Activated naive CD4-positive, alpha-beta T cell treated with anti-CD3 and anti-CD28 coated beads for 36 hours (primary cell): ENCODE measurements at regions of chr4 and their contacts with region 1.

Region 1: DNA sequence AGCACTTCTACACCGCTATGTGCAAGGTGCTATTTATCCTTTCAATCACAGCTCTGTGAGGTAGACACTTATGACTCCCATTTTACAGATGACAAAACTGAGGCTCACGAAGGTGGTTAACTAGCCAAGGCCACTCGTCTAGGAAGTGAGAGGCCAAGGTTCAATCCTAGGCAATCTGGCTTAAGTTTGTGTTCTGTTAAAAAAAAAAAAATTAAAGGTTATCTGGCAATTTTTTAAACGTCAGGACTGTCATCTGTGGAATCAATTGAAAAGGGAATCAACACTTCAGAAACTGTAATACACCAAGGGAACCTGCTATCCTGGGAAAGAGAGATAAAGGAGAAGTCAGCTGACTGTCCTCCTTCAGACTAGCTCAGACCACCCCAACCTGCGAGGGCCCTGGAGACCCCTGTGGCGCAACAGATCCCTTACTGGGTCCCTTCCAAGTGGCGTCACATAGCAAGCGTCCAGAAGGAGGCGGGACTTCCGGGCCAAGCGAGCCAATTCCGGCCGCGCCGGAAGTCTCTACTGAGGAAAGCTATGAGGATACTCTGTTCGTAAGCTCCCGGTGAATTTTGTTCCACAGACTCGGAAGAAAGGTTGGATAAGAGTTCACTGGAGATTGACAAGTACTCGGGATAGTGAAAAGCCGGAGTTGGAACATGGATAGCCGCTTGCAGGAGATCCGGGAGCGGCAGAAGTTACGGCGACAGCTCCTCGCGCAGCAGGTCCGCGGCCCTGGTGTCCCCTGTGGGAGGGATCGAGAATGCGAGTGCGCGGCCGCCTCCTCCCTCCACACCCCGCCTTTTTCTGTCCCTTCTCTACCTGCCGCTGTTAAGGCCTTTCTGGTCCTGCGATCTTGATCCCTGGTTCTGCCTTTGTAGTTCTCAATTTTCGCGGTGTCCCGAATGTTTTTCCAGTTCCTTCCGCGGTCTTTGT is at the start of gene METTL14:
- DNase-seq: peak; percentile 93
- H3K4me3 Mint-ChIP-seq: peak within 1 kb of the TSS; percentile 95
- H3K27ac Mint-ChIP-seq: peak within 1 kb of the TSS; percentile 89
- H3K4me1 Mint-ChIP-seq: peaks cover 27% of the 10 kb centered on the region
- H3K27me3 Mint-ChIP-seq: no peaks in the 10 kb centered on the region
- total RNA-seq, gene METTL14: 35.9 to 36.9 TPM

Region 2: DNA sequence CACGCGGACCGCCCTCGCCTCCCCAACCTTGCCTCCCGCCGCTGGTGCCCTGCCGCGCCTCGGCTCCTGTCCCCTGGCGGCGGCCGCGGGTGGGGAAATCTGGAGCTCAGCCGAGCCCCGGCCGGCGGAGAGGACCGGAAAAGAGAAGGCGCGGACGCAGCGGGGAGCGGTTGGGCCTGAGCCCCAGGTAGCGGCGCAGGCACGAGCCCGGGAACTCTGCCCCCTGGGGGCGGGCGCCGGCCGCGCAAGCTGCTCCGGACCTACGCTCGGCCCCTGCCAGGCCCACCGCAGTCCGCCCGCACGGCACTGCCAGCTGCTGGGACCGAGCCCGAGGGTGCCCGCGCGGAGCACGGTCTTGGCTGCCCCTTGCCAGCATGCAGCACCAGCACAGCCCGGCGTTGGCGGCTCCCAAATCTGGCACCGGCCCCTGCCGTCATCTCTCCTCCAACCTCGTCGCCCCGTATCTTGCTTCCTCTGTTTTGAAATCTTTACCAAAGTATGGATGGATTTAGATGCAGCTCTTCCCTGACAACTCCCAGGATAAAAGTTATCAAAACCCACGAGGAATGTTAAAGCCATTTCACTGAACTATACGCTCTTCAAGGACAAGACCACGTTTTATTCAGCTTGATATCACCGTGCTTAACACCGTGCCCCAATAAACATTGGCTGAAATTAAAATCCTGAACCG is 332.2 kb before region 1 on chr4 and contains the start of gene PRSS12:
- CTCF ChIA-PET with region 1: no interaction called
- intact Hi-C with region 1: loop called (anchors 5 kb)
- DNase-seq: peak; percentile 69
- H3K4me3 Mint-ChIP-seq: peak within 1 kb of the TSS; percentile 56
- H3K27ac Mint-ChIP-seq: no peak within 1 kb of the TSS
- H3K4me1 Mint-ChIP-seq: peaks cover 14% of the 10 kb centered on the region
- H3K27me3 Mint-ChIP-seq: peaks cover 72% of the 10 kb centered on the region
- total RNA-seq, gene PRSS12: not detected

Region 3: DNA sequence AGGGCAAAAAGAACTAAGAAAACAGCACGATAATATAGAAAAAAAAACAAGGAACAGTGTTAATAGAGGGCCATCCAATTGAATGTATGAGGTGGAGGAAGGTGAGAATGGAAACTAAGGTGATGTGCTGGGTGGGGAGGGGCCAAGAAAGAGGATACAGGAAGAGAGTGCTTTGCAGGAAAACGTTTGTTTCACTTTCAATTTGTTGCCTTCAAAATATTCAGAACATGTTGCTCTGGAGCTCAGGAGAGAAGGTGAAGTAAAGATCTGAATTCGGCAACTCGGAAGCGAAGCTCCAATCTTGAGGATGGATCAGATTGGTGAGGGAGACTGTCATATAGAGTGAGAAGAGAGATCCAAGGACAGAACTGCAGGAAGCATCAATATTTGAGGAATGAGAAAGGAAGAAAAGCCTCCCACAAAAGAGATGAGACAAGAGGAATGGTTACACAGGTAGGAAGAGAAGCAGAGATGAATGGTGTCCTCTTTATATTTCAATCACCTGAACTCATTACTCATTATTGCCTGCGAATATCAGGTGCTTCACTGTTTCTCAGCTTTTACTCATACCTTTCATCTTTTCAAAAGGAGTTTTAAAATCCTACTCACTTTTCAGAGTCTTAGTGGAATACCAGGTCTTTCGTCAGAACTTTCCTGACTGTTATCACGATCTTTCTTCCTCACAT is 165.5 kb after region 1 on chr4:
- CTCF ChIA-PET with region 1: no interaction called
- intact Hi-C with region 1: loop called (anchors 1 kb)
- DNase-seq: peak; percentile 50
- H3K4me3 Mint-ChIP-seq: peak overlapping the region; percentile 87
- H3K27ac Mint-ChIP-seq: peak overlapping the region; percentile 84
- H3K4me1 Mint-ChIP-seq: peaks cover 18% of the 10 kb centered on the region
- H3K27me3 Mint-ChIP-seq: no peaks in the 10 kb centered on the region

Region 4: GRCh38 chr4:119300101-119300978 is 615.2 kb after region 1 on chr4:
- CTCF ChIA-PET with region 1: no interaction called
- intact Hi-C with region 1: no loop called
- DNase-seq: peak; percentile 92
- H3K4me3 Mint-ChIP-seq: peak overlapping the region; percentile 97
- H3K27ac Mint-ChIP-seq: peak overlapping the region; percentile 95
- H3K4me1 Mint-ChIP-seq: peaks cover 25% of the 10 kb centered on the region
- H3K27me3 Mint-ChIP-seq: no peaks in the 10 kb centered on the region